ENCODE measurements at regions of chrX and their contacts with region 1.

Region 1: DNA sequence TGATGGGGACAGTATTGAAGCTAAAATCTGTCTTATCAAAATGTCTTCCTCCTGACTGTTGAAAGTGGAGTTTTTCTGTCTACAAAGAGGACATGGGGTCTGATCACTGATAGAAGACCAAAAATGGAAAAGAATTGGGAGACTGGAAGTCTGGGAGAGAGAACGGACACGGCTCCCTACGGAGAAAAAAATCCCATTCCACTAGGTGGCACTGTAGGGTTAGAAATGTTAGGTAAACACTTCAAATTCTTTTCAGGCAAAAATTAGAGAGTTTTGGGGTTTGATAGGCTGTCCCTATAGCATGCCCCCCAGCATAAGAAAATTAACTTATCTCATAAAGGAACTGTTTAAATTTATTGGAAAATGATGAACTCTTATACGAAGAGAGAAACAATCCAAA is 200.5 kb downstream of the FAM133A start:
- DNase-seq: no peak
- ATAC-seq: no peak
- H3K4me3 ChIP-seq: no peak overlapping the region
- H3K27ac ChIP-seq: no peak overlapping the region
- H3K4me1 ChIP-seq: no peaks in the 10 kb centered on the region
- H3K27me3 ChIP-seq: no peaks in the 10 kb centered on the region
- CTCF ChIP-seq: peak; percentile 53

Region 2: DNA sequence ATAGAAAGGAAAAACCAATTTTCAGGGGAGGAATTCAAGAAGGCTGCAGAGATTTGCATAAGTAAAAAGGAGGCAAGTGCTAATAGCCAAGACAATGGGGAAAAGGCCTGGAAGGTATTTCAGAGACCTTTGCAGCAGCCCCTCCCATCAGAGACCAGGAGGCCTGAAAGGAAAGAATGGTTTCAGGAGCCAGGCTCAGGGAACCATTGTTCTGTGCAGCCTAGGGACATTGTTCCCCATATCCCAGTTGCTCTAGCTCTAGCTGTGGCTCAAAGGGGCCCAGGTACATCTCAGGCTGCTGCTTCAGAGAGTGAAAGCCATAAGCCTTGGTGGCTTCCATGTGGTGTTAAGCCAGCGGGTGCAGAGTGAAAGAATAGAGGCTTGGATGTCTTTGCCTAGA is 225.2 kb before region 1 on chrX:
- CTCF ChIA-PET with region 1: no interaction called
- POLR2A ChIA-PET with region 1: no interaction called
- in situ Hi-C with region 1: no loop called
- intact Hi-C with region 1: no loop called
- DNase-seq: no peak
- ATAC-seq: no peak
- H3K4me3 ChIP-seq: no peak overlapping the region
- H3K27ac ChIP-seq: no peak overlapping the region
- H3K4me1 ChIP-seq: no peaks in the 10 kb centered on the region
- H3K27me3 ChIP-seq: no peaks in the 10 kb centered on the region
- CTCF ChIP-seq: no peak

Region 3: DNA sequence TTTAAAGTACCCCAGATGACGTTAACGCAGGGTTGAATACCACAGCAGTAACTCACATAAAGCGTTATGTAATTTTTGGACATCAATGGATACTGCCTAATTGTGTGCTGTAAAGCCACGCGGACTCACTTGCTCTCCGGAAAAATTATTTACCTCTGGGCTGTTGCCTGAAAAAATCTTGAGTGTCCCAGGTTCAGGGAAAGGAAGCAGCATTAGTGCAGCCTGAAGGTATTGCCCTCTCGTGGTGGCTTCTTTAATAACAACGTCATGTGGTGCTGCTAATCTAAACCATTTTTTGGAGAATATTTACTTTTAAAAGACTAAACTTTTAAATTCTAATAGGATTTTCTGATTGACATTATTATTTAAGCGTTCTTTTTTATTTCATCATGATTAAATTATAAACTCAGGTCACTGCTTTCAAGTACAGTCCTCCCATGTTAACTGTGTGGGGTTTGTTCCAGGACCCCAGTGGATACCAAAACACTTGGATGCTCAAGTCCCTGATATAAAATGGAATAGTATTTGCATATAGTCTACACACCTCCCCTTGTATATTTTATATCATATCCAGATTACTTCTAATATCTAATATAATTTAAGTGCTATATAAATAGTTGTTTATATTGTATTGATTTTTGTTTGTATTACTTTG is 184.3 kb after region 1 on chrX:
- CTCF ChIA-PET with region 1: no interaction called
- POLR2A ChIA-PET with region 1: no interaction called
- in situ Hi-C with region 1: no loop called
- intact Hi-C with region 1: loop called (anchors 10 kb)
- DNase-seq: no peak
- ATAC-seq: no peak
- H3K4me3 ChIP-seq: no peak overlapping the region
- H3K27ac ChIP-seq: no peak overlapping the region
- H3K4me1 ChIP-seq: no peaks in the 10 kb centered on the region
- H3K27me3 ChIP-seq: no peaks in the 10 kb centered on the region
- CTCF ChIP-seq: peak; percentile 69

Region 4: DNA sequence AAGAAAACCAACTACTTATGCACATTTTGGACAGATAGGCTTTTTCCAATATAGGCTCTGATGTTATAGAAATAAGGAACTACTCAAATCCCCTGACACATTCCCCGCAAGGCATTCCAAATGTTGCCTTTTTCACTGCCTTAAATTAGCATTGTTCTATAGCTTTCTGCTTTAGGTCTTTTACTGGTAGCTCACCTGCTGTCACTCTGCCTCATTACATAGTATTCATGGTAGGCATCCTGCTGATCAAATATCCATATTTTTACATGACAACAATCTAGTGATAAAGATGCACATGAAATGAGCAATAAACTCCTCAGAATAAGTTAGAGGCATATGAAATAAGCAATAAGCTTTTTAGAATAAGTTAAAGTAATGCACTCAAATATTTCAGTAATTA is 342.2 kb after region 1 on chrX:
- CTCF ChIA-PET with region 1: no interaction called
- POLR2A ChIA-PET with region 1: no interaction called
- in situ Hi-C with region 1: no loop called
- intact Hi-C with region 1: no loop called
- DNase-seq: no peak
- ATAC-seq: no peak
- H3K4me3 ChIP-seq: no peak overlapping the region
- H3K27ac ChIP-seq: no peak overlapping the region
- H3K4me1 ChIP-seq: no peaks in the 10 kb centered on the region
- H3K27me3 ChIP-seq: no peaks in the 10 kb centered on the region
- CTCF ChIP-seq: no peak

Region 5: DNA sequence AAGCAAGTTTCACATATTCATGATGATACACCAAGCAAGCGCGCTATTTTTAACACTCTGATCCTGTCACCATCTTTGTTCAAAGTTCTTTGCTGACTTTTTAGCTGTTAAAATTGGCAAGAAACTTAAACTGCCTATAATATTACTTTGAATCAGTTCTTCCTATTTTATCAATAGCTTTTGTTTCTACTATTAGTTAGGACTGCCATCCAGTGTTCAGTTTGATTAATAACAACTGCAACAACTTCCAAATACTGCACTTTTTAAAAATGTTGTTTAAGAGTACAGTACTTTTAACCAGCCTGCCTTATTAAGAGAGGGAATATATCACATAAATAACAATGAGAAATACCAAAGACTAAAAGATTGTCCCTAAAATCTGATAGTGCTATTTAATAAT is 413.8 kb after region 1 on chrX:
- CTCF ChIA-PET with region 1: no interaction called
- POLR2A ChIA-PET with region 1: no interaction called
- in situ Hi-C with region 1: no loop called
- intact Hi-C with region 1: loop called (anchors 5 kb)
- DNase-seq: no peak
- ATAC-seq: no peak
- H3K4me3 ChIP-seq: no peak overlapping the region
- H3K27ac ChIP-seq: no peak overlapping the region
- H3K4me1 ChIP-seq: no peaks in the 10 kb centered on the region
- H3K27me3 ChIP-seq: no peaks in the 10 kb centered on the region
- CTCF ChIP-seq: no peak; the same call in 1 of the 2 replicates

Measured in Panc1 (cell line).